ENCODE measurements at regions of chr13 and their contacts with region 1.

Region 1: DNA sequence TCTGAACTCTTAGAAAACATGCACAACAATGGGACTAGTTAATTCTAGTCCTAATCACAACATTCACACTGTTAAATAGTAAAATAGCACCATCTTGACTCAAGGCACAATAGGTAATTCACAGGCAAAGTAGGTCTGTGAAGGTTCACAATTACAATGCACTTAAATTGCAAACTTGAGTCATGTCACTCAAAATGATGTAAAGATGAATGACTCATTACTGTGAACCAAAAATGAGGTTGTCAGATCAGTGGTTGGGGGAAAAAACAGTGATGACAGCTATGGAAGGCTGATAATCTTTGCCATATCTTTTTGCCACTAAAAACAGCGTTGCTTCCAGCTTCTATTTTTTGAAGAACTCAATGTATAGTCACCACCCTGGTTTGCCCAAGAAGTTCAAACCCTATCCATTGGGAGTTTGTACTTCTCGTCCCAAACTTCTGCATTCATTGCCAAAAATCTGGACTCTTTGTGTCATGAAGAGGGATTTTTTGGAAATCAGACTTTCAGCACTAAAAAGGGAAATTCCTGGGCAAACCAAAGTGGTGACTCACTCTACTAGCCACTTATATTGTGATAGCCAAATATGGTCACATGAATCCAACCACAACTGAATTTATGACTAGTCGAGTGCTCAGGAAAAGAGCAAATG is 200.9 kb upstream of the TMTC4 start:
- DNase-seq: peak; percentile 87
- H3K4me3 ChIP-seq: no peak overlapping the region
- H3K27ac ChIP-seq: peak overlapping the region; percentile 89
- H3K4me1 ChIP-seq: peaks cover 13% of the 10 kb centered on the region
- H3K27me3 ChIP-seq: no peaks in the 10 kb centered on the region
- CTCF ChIP-seq: no peak
- POLR2A ChIP-seq: no peak

Region 2: GRCh38 chr13:100887729-100888156 is 12.2 kb after region 1 on chr13:
- CTCF ChIA-PET with region 1: interaction called, 4 read pairs
- POLR2A ChIA-PET with region 1: no interaction called
- dilution Hi-C with region 1: no loop called
- intact Hi-C with region 1: loop called (anchors 1 kb)
- DNase-seq: peak; percentile 86
- H3K4me3 ChIP-seq: no peak overlapping the region
- H3K27ac ChIP-seq: peak overlapping the region; percentile 71
- H3K4me1 ChIP-seq: peaks cover 8% of the 10 kb centered on the region
- H3K27me3 ChIP-seq: no peaks in the 10 kb centered on the region
- CTCF ChIP-seq: no peak
- POLR2A ChIP-seq: no peak

Region 3: GRCh38 chr13:101007245-101007644 is 131.7 kb after region 1 on chr13:
- CTCF ChIA-PET with region 1: no interaction called
- POLR2A ChIA-PET with region 1: no interaction called
- dilution Hi-C with region 1: no loop called
- intact Hi-C with region 1: no loop called
- DNase-seq: no peak
- H3K4me3 ChIP-seq: no peak overlapping the region
- H3K27ac ChIP-seq: no peak overlapping the region
- H3K4me1 ChIP-seq: no peaks in the 10 kb centered on the region
- H3K27me3 ChIP-seq: no peaks in the 10 kb centered on the region
- CTCF ChIP-seq: no peak
- POLR2A ChIP-seq: no peak